ENCODE measurements at regions of chr3 and their contacts with region 1.

Region 1: DNA sequence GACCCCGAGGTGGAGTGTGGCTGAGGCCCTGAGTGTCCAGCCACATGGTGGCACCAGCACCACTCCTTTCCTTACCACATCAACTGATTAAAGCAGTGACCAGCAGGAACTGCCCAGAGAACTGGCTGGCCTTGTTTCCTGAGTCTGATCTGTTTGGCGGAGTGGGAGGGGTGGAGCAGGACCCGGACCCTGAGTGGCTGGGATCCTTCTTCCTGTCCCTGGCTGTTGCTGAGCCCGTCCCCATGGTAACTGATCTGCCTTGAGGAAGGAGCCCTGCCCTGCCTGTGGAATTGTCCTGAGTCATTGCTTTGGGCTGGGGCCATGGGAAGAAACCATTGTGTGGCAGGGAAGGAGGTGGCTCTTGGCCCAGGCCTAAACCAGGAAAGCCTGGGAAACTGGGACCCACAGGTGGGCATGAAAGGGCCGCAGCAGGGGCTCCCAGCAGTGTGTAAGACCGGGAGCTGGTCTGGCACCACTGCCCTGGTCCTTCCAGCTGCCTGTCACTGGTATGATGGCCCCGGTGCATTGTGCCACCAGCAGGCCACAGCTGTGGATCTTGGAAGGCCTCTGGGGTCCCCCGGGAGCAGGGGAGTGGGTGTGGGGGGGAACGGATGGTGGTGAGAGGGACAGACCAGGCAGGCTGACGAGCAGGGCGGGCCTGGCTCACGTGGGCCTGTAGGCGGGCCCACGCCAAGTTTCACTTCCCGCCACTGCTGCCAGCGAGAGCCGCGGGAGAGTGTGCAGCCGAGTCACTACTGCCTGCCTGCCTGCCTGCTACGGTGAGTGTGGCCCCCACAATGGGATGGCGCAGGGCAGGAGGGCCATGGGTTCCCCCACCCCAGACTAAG is 19.2 kb downstream of the ATRIP start:
- DNase-seq: peak; percentile 100
- H3K4me3 ChIP-seq: peak overlapping the region; percentile 54 to 64
- H3K27ac ChIP-seq: peak overlapping the region; percentile 93 to 95
- H3K4me1 ChIP-seq: peaks cover 0 to 54% (median 52%) of the 10 kb centered on the region in 4 donors
- H3K27me3 ChIP-seq: no peaks in the 10 kb centered on the region
- CTCF ChIP-seq: peak; percentile 76 to 92

Region 2: DNA sequence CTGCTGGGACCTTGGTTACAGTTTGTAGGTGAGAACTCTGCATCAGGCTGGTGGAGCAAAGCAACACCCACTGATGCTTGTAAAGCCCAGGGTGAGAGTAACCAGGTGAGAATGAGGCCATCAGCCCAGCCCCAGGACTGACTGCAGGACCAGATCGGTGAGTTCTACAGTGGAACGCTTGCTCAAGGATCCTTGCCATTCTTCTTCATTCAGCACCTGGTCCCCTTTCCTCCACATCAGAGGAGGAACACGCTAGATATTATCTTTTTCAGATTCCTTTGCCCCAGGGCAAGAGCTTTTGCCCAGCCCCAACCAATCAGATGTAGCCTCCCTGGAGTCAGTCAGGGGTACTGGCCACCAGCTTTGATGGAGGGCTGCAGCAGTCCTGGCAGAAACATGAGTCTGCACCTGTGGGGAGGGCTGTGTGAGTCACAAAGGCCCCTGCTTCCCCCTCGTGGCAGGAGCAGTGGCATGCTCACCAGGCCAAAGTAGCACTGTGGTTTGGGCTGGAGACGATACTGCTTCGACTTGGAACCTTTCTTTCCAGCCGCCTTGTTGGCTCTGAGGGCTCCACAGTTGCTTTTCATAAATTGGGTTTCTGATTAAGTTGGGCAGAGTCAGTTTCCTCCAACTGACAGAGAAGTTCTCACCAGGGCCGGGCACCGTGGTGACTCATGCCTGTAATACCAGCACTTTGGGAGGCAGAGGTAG is 41.8 kb after region 1 on chr3:
- intact Hi-C with region 1: loop called (anchors 5 kb)
- DNase-seq: peak; percentile 30 to 75
- H3K4me3 ChIP-seq: no peak overlapping the region
- H3K27ac ChIP-seq: peak overlapping the region; percentile 36 to 54
- H3K4me1 ChIP-seq: peaks cover 0 to 34% (median 23%) of the 10 kb centered on the region in 4 donors
- H3K27me3 ChIP-seq: no peaks in the 10 kb centered on the region
- CTCF ChIP-seq: peak; percentile 38 to 53

Region 3: GRCh38 chr3:48518638-48519276 is 53.0 kb after region 1 on chr3:
- intact Hi-C with region 1: no loop called
- DNase-seq: no peak
- H3K4me3 ChIP-seq: no peak overlapping the region
- H3K27ac ChIP-seq: no peak overlapping the region
- H3K4me1 ChIP-seq: no peaks in the 10 kb centered on the region
- H3K27me3 ChIP-seq: no peaks in the 10 kb centered on the region
- CTCF ChIP-seq: no peak

Region 4: DNA sequence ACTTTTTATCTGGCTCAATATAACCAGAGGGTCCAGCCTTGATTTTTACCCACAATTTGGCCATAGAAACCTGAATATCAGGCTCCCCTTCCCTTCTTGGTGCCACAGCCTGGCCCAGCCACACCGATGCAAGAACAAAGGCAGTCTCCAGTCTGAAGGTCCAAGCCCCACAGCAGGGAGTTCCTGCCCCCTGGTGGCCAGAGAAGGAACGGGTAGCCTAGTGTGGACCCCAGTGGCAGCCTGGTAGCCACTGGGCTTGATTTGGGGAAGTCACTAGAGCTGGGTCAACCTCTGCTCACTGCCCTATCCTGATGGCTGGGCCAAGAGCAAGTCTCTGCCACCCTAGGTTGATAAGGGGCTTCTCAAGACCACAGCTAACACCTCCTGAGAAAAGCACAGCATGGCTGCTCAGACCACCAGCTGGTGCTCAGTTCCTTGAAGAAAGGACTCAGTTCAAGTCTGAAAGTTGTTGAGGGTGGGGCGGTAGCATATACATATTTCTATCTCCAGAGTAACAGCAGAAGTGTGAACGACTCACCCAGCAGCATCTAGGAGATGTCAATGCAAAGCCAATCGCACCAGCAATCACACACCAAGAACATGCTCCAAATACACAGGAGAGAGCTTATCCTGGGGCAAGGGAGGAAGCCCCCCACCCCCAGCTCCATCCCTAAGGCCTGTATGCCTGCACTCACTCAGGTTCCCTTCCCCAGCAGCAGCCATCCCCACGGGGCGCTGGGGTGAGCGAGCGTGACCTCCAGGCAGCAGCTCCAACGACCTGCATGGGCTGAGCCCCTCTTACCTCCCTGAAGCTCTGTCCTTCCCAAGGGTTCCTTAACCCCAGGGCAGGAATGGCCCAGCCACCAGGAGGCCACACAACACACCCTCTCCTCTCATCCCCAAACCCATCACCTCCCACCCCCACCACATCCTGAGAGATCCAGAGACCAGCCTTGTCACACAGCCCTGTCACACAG is 83.3 kb after region 1 on chr3:
- intact Hi-C with region 1: loop called (anchors 2 kb)
- DNase-seq: peak; percentile 88 to 93
- H3K4me3 ChIP-seq: no peak overlapping the region
- H3K27ac ChIP-seq: peak overlapping the region; percentile 11 to 17
- H3K4me1 ChIP-seq: peaks cover 0 to 3% (median 0%) of the 10 kb centered on the region in 4 donors
- H3K27me3 ChIP-seq: no peaks in the 10 kb centered on the region
- CTCF ChIP-seq: peak; percentile 95 to 99

Region 5: DNA sequence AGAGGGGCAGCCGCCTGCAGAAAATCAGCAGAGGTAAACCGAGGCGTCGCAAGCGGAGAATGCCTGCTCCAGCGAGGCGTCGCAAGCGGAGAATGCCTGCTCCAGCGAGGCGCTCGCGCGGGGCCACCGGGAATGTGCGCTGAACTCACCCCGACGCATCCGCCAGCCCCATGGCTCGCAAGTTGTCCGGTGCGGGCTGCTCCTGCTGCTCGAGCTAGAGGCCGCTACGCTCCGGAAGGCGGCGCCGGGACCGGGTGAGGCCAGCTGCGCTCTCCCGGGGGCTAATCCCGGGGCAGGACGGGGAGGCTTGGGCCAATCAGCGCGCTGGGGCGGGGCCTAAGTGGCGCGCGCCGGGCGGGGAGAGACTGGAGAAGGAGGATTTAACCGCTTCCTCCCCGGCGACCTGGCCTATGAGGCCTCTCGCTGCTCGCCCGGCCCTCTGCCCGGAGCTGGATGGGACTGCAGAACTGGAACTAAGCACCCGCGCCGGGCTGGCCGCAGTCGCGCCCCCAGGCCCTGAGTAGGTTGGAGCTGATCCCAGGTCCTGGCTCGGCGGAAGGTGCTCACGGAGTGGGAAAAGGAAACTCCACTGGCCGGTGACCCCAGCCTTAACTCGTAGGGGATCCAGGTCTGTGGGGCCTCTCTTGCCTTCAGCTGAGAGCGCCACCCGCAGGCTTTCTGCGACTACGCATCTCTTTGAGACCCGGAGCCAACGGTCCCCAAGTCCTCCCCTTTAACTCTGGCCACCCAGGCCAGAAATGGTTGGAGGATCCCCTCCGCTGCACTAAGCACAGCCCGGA is 169.7 kb after region 1 on chr3 and contains the start of gene SLC26A6:
- intact Hi-C with region 1: loop called (anchors 10 kb)
- DNase-seq: peak; percentile 96 to 98
- H3K4me3 ChIP-seq: peak within 1 kb of the TSS; percentile 78 to 90
- H3K27ac ChIP-seq: peak within 1 kb of the TSS; percentile 83 to 85
- H3K4me1 ChIP-seq: peaks cover 0 to 47% (median 36%) of the 10 kb centered on the region in 4 donors
- H3K27me3 ChIP-seq: no peaks in the 10 kb centered on the region
- CTCF ChIP-seq: peak; percentile 37 to 50

Region 6: GRCh38 chr3:48685602-48686511 is 220.1 kb after region 1 on chr3 and contains the start of gene NCKIPSD:
- intact Hi-C with region 1: loop called (anchors 10 kb)
- DNase-seq: peak; percentile 86 to 92
- H3K4me3 ChIP-seq: peak within 1 kb of the TSS; percentile 67 to 90
- H3K27ac ChIP-seq: peak within 1 kb of the TSS; percentile 74 to 89
- H3K4me1 ChIP-seq: peaks cover 0 to 37% (median 32%) of the 10 kb centered on the region in 4 donors
- H3K27me3 ChIP-seq: no peaks in the 10 kb centered on the region
- CTCF ChIP-seq: peak; percentile 82 to 93